Activated CD8-positive, alpha-beta T cell treated with anti-CD3 and anti-CD28 coated beads for 36 hours (primary cell): ENCODE measurements at regions of chr4 and their contacts with region 1.

Region 1: GRCh38 chr4:48141048-48141447 is 7.0 kb upstream of the TXK start:
- DNase-seq: no peak
- ATAC-seq: peak; percentile 40
- H3K4me3 Mint-ChIP-seq: no peak overlapping the region
- H3K27ac Mint-ChIP-seq: no peak overlapping the region
- H3K4me1 Mint-ChIP-seq: peaks cover 49% of the 10 kb centered on the region
- H3K27me3 Mint-ChIP-seq: no peaks in the 10 kb centered on the region
- CTCF ChIP-seq: peak; percentile 84

Region 2: GRCh38 chr4:48002267-48002666 is 138.8 kb before region 1 on chr4:
- CTCF ChIA-PET with region 1: interaction called, 22 read pairs
- POLR2A ChIA-PET with region 1: no interaction called
- intact Hi-C with region 1: no loop called
- DNase-seq: no peak
- ATAC-seq: no peak
- H3K4me3 Mint-ChIP-seq: no peak overlapping the region
- H3K27ac Mint-ChIP-seq: no peak overlapping the region
- H3K4me1 Mint-ChIP-seq: no peaks in the 10 kb centered on the region
- H3K27me3 Mint-ChIP-seq: peaks cover 2% of the 10 kb centered on the region
- CTCF ChIP-seq: no peak

Region 3: DNA sequence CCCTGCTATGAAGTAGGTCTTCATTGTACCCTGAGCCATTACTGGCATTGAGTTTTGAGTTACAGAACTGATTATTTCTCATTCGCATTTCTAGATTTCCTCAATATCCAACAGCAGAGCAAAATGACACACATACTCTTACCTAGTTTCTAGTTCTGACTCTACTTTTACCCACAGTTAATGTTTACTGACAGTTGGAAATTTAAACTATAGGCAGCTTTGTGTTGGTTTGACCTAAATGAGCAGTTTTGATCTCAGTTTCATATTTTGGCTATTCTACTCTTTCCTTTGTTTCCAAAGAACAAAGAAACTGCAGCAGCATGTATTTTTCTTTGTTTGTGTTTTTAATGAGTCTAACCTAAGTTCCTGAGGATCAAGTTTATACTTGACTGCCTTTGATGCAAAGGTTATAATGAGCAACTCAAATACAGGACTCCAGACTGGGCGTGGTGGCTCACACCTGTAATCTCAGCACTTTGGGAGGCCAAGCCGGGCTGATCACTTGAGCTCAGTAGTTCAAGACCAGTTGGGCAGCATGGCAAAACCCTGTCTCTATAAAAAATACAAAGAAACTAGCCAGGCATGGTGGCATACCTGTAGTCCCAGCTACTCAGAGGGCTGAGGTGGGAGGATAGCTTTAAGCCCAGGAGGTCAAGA is 37.4 kb before region 1 on chr4:
- CTCF ChIA-PET with region 1: interaction called, 22 read pairs
- POLR2A ChIA-PET with region 1: interaction called, 4 read pairs
- intact Hi-C with region 1: no loop called
- DNase-seq: peak; percentile 39
- ATAC-seq: peak; percentile 81
- H3K4me3 Mint-ChIP-seq: no peak overlapping the region
- H3K27ac Mint-ChIP-seq: peak overlapping the region; percentile 84
- H3K4me1 Mint-ChIP-seq: peaks cover 49% of the 10 kb centered on the region
- H3K27me3 Mint-ChIP-seq: no peaks in the 10 kb centered on the region
- CTCF ChIP-seq: no peak

Region 4: DNA sequence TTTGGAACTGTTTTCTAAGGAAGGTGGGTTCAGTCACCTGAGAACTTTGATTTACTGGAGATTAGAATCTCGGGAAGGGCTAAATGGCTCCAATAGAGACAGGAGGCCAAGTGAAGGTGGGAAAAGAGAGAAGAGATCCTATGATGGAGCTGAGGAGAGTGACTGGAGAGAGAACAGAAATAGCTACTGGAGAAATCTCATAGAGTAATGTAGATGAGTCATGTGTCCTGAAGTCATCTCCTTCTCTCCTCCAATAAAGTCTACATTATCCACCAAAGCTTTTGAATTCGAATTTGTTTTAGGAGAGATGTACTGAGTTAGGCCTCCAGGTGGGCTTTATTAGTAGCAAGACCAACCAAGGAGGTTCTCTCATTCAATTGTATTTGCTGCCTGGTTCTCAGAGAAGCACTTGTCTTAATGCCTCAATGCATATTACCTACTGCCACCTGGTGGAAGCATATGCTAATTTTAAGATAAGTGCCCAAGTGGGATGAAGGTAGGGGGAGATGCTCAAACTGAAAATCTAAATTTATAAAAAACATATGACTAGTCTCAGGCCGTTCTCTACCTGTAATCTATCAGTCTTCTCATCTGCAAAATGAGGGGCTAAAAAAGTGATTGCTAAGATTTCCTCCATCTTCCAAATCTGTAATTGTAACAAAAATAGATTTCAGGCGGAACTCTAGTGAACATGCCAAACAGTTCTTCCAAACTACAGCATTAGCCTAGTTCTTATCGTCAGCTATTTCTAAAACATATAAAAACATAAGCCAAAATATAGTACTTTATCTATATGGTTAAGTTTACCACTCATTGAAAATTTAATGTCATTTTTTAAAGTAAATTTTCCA is 31.4 kb before region 1 on chr4:
- CTCF ChIA-PET with region 1: interaction called, 22 read pairs
- POLR2A ChIA-PET with region 1: interaction called, 4 read pairs
- intact Hi-C with region 1: no loop called
- DNase-seq: no peak
- ATAC-seq: peak; percentile 78
- H3K4me3 Mint-ChIP-seq: no peak overlapping the region
- H3K27ac Mint-ChIP-seq: peak overlapping the region; percentile 65
- H3K4me1 Mint-ChIP-seq: peaks cover 61% of the 10 kb centered on the region
- H3K27me3 Mint-ChIP-seq: no peaks in the 10 kb centered on the region
- CTCF ChIP-seq: peak; percentile 73

Region 5: GRCh38 chr4:48122756-48123155 is 18.3 kb before region 1 on chr4:
- CTCF ChIA-PET with region 1: interaction called, 185 read pairs
- POLR2A ChIA-PET with region 1: interaction called, 49 read pairs
- intact Hi-C with region 1: loop called (anchors 2 kb)
- DNase-seq: no peak
- ATAC-seq: no peak
- H3K4me3 Mint-ChIP-seq: no peak overlapping the region
- H3K27ac Mint-ChIP-seq: no peak overlapping the region
- H3K4me1 Mint-ChIP-seq: peaks cover 69% of the 10 kb centered on the region
- H3K27me3 Mint-ChIP-seq: no peaks in the 10 kb centered on the region
- CTCF ChIP-seq: no peak

Region 6: DNA sequence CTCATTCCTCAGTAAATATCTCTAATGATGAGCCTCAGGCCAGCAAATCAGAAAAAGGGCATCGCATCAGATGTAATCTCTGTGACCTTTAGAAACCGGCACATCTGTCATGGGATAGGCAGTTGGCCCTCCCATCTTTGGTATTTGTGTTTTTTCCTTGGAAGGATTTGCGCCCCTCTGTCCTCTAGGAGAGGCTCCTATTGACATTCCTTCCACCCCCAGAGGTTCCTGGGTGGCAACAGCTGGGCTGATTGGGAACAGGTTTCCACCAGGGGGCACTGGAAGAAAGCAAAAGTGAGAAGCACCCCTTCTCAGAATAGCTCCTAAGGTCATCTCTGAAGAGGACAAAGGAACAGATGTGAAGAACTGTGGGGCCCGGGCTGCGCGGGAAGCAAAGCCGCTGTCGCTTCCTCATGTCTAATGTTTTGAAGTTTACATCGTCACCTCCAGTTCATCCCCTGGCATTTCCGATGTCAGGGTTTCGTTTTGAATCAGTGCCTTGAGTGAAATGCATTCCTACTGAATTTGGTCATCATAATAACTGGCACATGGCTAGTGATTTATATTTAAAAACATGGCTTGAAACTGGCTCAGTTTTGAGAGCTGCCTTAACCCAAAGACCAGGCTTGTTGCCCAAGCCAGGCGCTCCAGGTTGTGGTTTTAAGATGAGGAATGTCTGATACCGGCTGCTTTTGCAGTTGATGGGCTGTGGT is 13.2 kb before region 1 on chr4:
- CTCF ChIA-PET with region 1: interaction called, 185 read pairs
- POLR2A ChIA-PET with region 1: interaction called, 49 read pairs
- intact Hi-C with region 1: loop called (anchors 2 kb)
- DNase-seq: peak; percentile 96
- ATAC-seq: peak; percentile 66
- H3K4me3 Mint-ChIP-seq: peak overlapping the region; percentile 90
- H3K27ac Mint-ChIP-seq: peak overlapping the region; percentile 99
- H3K4me1 Mint-ChIP-seq: peaks cover 89% of the 10 kb centered on the region
- H3K27me3 Mint-ChIP-seq: no peaks in the 10 kb centered on the region
- CTCF ChIP-seq: peak; percentile 63

Region 7: DNA sequence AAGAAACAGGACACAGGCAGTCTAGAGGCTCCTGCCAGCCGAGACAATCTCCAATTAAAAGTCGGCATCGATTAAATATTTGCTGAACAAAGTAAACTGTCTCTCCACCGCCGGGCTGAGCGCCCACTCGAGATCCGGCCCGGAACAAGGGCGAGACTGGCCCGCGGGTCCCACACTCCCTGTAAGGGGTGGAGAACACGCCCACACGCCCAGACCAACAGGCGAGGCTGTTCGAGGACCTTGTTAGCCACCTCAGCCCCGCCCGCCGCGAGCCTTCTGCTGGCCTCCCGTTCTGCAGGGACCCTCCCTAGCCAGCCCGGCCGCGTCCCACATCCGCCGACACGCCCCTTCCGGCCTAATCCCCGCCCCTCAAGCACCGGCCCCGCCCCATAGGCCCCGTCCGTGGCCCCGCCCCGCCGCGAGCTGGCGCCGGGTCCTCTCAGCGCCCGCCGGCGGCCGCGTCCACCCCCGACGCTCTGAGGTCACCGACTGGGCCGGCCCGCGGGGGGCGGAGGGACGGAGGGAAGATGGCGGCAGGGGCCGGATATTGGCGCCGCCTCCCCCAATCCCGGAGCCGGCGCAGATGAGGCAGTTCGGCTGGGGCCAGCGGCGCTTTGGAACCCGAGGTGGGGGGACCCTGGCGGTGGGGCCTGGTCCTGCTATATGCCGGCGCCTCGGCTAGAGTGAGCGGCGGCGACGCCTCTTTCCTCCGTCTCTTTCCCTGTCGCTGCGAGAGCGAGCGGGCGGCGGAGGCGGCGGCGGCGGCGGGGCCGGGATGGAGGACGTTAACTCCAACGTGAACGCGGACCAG is 200.1 kb after region 1 on chr4 and contains the start of gene SLAIN2:
- CTCF ChIA-PET with region 1: no interaction called
- POLR2A ChIA-PET with region 1: no interaction called
- intact Hi-C with region 1: loop called (anchors 5 kb)
- DNase-seq: peak; percentile 98
- ATAC-seq: peak; percentile 87
- H3K4me3 Mint-ChIP-seq: peak within 1 kb of the TSS; percentile 98
- H3K27ac Mint-ChIP-seq: peak within 1 kb of the TSS; percentile 98
- H3K4me1 Mint-ChIP-seq: peaks cover 56% of the 10 kb centered on the region
- H3K27me3 Mint-ChIP-seq: no peaks in the 10 kb centered on the region
- CTCF ChIP-seq: no peak
- total RNA-seq, gene SLAIN2: 48.6 to 53.2 TPM